ENCODE measurements at regions of chr19 and their contacts with region 1.

Region 1: DNA sequence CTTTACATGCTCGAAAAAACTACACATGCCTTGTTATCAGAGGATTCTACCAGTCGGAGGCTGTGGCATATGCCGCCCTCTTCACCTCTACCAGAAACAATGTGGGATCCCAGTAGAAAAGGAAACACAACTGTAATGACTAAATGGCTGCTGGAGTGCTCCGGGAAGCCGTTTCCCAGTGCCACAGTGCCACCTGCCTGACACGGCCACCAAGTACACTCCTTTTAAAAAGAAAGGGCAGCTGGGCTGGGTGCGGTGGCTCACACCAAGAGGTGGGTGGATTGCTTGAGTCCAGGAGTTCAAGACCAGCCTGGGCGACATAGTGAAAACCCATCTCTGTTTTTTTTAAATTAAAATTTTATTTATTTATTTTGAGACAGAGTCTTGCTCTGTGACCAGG is 67.3 kb downstream of the TRPM4 start:
- DNase-seq: peak; percentile 19
- H3K4me3 Mint-ChIP-seq: no peak overlapping the region
- H3K27ac Mint-ChIP-seq: no peak overlapping the region
- H3K4me1 Mint-ChIP-seq: peaks cover 4% of the 10 kb centered on the region
- H3K27me3 Mint-ChIP-seq: no peaks in the 10 kb centered on the region

Region 2: DNA sequence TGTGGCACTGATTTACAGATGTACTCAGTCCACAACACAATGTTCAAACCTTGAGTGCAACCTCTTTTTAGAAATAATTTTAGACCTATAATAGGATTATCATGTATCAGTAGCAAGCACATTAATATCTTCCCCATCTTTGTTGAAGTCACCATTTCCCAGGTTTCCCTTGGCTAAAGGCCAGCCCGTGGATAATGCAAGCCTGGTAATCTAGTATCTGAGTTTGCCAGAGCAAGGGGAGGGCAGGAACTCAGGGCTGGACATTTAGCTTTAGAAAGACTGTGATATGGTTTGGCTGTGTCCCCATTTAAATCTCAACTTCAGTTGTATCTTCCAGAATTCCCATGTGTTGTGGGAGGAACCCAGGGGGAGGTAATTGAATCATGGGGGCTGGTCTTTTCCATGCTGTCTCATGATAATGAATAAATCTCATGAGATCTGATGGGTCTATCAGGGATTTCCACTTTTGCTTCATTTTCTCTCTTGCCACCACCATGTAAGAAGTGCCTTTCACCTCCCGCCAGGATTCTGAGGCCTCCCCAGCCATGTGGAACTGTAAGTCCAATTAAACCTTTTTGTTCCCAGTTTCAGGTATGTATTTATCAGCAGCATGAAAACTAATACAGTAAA is 62.4 kb after region 1 on chr19:
- intact Hi-C with region 1: no loop called
- DNase-seq: no peak
- H3K4me3 Mint-ChIP-seq: no peak overlapping the region
- H3K27ac Mint-ChIP-seq: no peak overlapping the region
- H3K4me1 Mint-ChIP-seq: no peaks in the 10 kb centered on the region
- H3K27me3 Mint-ChIP-seq: peaks cover 3% of the 10 kb centered on the region

Region 3: GRCh38 chr19:49475995-49476880 is 251.4 kb after region 1 on chr19:
- intact Hi-C with region 1: loop called (anchors 1 kb)
- DNase-seq: peak; percentile 68
- H3K4me3 Mint-ChIP-seq: peak overlapping the region; percentile 92
- H3K27ac Mint-ChIP-seq: peak overlapping the region; percentile 83
- H3K4me1 Mint-ChIP-seq: peaks cover 26% of the 10 kb centered on the region
- H3K27me3 Mint-ChIP-seq: no peaks in the 10 kb centered on the region

Measured in activated T-helper 2 cell treated with anti-CD3 and anti-CD28 coated beads, Interferon-gamma antibody, Interleukin-2, Interleukin-4, amounts not matched to agents 10 μg/mL and 5 μg/mL and 100 μg/mL, durations not matched to agents 14 hours and 24 hours and 36 hours (primary cell).